Transverse colon (tissue), 4 donors: ENCODE measurements at regions of chrX and their contacts with region 1.

Region 1: DNA sequence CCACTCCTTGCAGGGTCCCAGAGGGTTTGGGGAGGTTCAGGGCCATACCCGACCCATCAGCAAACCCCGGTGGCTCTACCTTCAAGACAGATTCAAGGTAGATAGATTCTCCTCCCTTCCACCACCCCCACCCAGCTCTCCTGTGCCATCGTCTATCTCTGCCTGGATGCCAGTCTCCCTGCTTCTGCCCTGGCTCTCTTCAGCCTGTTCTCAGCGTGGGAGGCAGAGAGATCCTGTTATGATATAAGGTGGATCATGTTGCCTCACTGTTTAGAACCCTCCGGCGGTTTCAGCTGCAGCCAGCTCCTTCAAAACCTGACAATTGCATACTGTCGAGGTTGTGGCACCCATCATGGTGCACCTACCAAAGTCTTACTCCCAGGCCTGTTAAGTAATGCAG is 5.4 kb downstream of the LAGE3 start:
- DNase-seq: no peak
- H3K4me3 ChIP-seq: no peak overlapping the region
- H3K27ac ChIP-seq: no peak overlapping the region
- H3K4me1 ChIP-seq: peaks cover 0 to 5% (median 2%) of the 10 kb centered on the region in 4 donors
- H3K27me3 ChIP-seq: no peaks in the 10 kb centered on the region
- CTCF ChIP-seq: no peak
- EP300 ChIP-seq: no peak
- POLR2A ChIP-seq: no peak

Region 2: DNA sequence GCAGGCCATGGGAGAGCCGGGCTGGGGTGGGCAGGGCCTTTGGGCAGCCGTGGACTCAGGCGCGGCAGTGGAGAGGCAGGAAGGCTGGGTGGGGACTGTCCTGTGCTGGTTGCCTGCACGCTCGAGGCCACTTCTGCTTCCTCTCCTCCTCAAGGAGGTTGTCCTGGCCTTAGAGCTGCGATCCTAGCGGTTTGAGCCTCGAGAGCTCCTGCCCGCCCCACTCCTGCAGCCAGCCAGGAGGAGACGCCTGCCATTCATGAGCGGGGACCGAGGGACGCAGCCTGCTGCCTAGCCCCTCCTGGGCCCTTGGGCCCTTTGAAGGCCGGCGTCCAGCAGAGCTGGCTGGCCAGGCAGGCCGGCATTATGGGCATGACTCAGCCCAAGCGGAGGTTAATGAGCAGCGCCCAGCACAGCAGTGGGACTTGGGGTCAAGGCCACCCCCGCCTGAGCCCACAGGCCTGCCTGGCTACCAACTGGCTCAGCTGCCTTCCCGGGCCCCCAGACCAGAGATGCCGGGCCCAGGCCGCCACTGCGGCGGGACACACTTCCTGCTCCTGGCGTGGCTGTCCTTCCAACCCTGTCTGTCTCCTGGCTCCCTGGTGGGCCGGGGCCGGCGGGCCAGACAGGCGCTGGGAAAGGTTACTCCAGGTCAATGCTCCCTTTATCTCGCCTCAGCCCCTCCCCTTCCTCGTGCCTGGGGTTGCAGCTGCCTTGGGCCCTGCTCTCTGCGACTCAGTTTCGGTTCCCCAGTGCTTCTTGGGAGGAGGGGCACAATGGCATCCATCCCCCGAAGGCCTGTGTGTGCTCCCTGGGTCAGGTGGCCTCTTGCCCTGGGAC is 747.2 kb before region 1 on chrX:
- in situ Hi-C with region 1: no loop called
- intact Hi-C with region 1: no loop called
- DNase-seq: peak; percentile 71
- H3K4me3 ChIP-seq: peak overlapping the region in 2 of 4 donors; percentile 5 to 88
- H3K27ac ChIP-seq: peak overlapping the region; percentile 95 to 98 (median 97)
- H3K4me1 ChIP-seq: peaks cover 25 to 56% (median 44%) of the 10 kb centered on the region in 4 donors
- H3K27me3 ChIP-seq: no peaks in the 10 kb centered on the region
- CTCF ChIP-seq: no peak
- EP300 ChIP-seq: no peak
- POLR2A ChIP-seq: no peak

Region 3: DNA sequence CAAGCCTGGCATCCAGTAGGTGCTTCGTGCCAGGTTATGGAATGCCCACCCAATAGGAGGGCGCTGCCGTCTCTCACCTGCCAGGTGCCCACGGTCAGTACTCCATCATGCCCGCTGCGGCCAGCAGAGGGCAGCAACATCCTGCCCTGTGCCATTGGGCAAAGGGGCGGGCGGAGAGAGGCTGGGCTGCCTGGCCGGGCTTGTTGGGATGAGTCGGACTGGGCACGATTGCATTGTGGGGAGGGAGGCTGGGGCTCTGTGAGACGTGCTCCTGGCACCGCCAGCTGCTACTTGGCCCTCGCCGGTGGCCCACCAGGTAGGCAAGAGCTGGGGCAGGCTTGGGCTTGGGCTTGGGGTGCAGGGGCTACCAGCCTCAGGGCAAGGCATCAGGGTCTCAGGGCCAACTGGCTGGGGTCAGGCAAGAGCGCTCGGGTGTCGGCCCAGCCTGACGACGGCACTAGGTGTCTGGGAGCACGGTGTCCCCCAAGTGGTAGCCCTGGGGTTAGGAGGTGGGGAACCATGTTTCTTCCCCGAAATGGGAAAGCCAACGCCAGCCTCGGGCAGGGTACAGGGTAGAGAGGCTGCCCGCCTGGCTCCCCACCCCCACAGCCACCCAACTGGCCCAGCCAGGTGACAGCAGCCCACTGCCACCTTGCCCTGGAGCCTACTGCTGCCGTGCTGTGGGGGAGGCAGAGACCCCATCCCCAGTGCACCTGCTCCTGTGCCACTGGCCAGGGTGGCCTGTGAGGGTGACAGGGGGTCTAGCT is 709.6 kb before region 1 on chrX and contains the start of gene PLXNB3:
- in situ Hi-C with region 1: no loop called
- intact Hi-C with region 1: no loop called
- DNase-seq: peak; percentile 84
- H3K4me3 ChIP-seq: peak within 1 kb of the TSS in 3 of 4 donors; percentile 2 to 13 (median 12)
- H3K27ac ChIP-seq: peak within 1 kb of the TSS; percentile 47 to 81 (median 65)
- H3K4me1 ChIP-seq: no peaks in the 10 kb centered on the region
- H3K27me3 ChIP-seq: no peaks in the 10 kb centered on the region
- CTCF ChIP-seq: peak; percentile 67 to 86 (median 76)
- EP300 ChIP-seq: no peak
- POLR2A ChIP-seq: no peak
- total RNA-seq, gene PLXNB3: 3.1 to 46.2 (median 24.7) TPM

Region 4: GRCh38 chrX:154458114-154458953 is 15.4 kb before region 1 on chrX and contains the start of gene PLXNA3:
- in situ Hi-C with region 1: no loop called
- intact Hi-C with region 1: loop called (anchors 1 kb)
- DNase-seq: peak; percentile 53
- H3K4me3 ChIP-seq: peak within 1 kb of the TSS; percentile 56 to 78 (median 62)
- H3K27ac ChIP-seq: peak within 1 kb of the TSS; percentile 65 to 91 (median 80)
- H3K4me1 ChIP-seq: peaks cover 2 to 9% (median 6%) of the 10 kb centered on the region in 4 donors
- H3K27me3 ChIP-seq: no peaks in the 10 kb centered on the region
- CTCF ChIP-seq: no peak
- EP300 ChIP-seq: no peak
- POLR2A ChIP-seq: no peak
- total RNA-seq, gene PLXNA3: 17.3 to 128 (median 52.8) TPM

Region 5: DNA sequence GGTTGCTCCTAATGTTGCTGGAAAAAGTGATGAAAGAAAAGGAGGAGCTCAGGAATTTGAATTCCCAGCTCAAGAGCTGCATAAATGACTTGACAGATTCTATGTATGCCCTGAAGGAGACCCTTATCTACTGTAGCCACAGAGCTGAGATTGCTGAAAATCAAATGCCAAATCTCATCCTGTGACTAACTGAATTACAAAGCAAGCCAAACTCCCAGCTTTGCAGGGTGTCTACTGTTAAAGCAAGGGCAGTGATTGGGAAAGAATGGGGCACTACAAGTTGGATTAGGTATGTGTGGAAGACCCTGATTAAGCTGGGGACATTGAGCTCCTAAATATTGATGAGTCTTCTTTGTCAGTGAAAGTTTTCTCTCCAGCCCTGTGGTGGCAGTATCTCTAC is 381.5 kb after region 1 on chrX:
- in situ Hi-C with region 1: no loop called
- intact Hi-C with region 1: no loop called
- DNase-seq: no peak
- H3K4me3 ChIP-seq: no peak overlapping the region
- H3K27ac ChIP-seq: no peak overlapping the region
- H3K4me1 ChIP-seq: no peaks in the 10 kb centered on the region
- H3K27me3 ChIP-seq: no peaks in the 10 kb centered on the region
- CTCF ChIP-seq: no peak
- EP300 ChIP-seq: no peak
- POLR2A ChIP-seq: no peak